Gastrocnemius medialis (tissue), 4 donors: ENCODE measurements at regions of chr2 and their contacts with region 1.

Region 1: GRCh38 chr2:36785179-36785795 is 88.8 kb downstream of the VIT start:
- DNase-seq: peak in 1 of 2 donors; percentile 32
- ATAC-seq: peak in 1 of 2 donors; percentile 69
- H3K4me3 ChIP-seq: no peak overlapping the region
- H3K27ac ChIP-seq: no peak overlapping the region
- H3K4me1 ChIP-seq: no peaks in the 10 kb centered on the region
- H3K27me3 ChIP-seq: no peaks in the 10 kb centered on the region
- CTCF ChIP-seq: peak; percentile 72 to 95 (median 84)
- POLR2A ChIP-seq: no peak

Region 2: DNA sequence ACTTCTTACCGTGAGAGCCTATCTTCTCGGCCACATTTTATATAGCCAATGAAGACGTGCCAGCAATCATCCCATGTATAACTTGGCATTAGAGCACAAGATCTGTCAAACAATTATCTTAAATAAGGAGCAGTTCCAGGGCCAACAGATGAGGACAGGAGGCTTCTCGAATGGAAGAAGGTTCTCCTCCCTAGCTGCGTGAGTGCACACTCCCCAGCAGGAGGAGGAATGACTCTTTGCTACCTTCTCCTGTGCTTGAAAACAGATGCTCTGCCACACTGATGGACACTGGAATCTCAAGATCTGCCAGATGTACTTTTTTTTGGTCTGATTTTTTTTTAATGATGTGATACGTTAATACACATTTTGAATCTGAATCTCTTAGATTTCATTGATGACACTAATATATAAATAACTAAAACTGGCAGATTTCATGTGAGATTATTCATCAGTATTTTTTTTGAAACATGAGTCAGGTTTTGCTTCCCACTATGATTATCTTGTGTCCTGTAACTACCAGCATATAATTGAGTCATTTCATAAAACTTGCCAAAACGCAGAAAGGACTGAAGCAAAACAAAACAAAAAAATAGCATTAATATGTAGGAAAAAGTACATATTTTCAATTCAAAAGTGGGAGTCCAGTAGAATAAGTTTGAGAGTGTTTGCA is 89.4 kb before region 1 on chr2:
- in situ Hi-C with region 1: loop called in 1 of 4 experiments (anchors 10 kb)
- intact Hi-C with region 1: loop called (anchors 5 kb)
- DNase-seq: no peak
- ATAC-seq: peak; percentile 46 to 51
- H3K4me3 ChIP-seq: peak overlapping the region in 1 of 4 donors; percentile 35
- H3K27ac ChIP-seq: no peak overlapping the region
- H3K4me1 ChIP-seq: no peaks in the 10 kb centered on the region
- H3K27me3 ChIP-seq: no peaks in the 10 kb centered on the region
- CTCF ChIP-seq: peak in 1 of 5 experiments; percentile 19
- POLR2A ChIP-seq: no peak

Region 3: DNA sequence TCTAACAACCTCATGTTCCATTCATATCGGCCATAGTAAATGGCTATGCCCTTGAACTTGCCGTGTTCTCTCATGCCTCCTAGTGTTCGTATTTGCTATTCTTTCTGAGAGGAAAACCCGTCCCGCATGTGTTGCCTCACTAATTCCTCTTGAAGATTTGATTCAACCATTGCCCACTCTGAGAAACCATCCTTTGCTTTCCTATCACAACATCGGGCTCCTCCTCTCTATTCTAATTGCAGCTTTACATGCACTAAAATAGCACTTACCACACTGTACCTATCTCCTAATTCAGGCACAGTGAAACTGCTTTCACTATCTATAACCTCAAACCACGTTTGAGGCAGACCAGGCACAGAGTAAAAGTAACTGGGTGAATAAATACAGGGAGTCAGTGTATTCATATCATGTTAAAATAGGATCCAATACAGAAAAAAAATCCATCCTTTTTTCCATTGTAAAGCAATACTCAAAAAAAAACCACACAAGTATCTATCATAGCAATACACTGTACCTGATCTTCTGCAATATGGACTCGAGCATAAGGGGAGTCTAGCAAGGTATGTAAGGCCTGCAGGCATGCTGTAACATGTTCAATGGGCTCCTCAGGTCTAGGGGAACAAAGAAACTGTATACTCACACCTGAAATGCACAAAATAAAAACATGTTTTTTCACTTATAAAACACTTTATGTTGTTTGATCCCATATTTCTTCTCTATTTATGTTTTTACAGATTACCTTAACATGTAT is 220.0 kb after region 1 on chr2:
- in situ Hi-C with region 1: no loop called
- intact Hi-C with region 1: loop called (anchors 10 kb)
- DNase-seq: no peak
- ATAC-seq: no peak
- H3K4me3 ChIP-seq: no peak overlapping the region
- H3K27ac ChIP-seq: no peak overlapping the region
- H3K4me1 ChIP-seq: no peaks in the 10 kb centered on the region
- H3K27me3 ChIP-seq: no peaks in the 10 kb centered on the region
- CTCF ChIP-seq: no peak
- POLR2A ChIP-seq: no peak